ENCODE measurements at regions of chr6 and their contacts with region 1.

Region 1: DNA sequence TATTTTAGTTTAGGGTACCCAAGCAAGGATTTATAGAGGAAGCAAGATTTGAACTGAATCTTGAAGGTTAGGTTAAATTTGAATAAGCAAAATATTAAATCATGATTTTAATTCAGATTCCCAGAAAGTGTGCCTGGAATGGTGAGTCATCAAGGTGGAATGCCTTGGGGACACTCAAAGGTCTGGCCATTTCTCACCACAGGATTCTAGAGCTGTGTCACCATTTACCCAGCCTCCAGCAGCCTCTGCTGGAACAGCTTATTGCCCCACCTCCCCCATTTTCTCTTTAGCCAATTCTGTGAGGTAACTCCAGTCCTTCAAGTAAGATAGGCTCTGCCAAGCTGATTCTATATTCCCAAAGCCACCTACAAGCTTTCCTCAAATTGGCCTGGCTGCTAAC is 181.4 kb downstream of the SIM1 start:
- DNase-seq: peak; percentile 19 to 38 (median 33)
- ATAC-seq: peak; percentile 63
- H3K4me3 ChIP-seq: no peak overlapping the region
- H3K27ac ChIP-seq: no peak overlapping the region
- H3K4me1 ChIP-seq: peaks cover 2 to 5% of the 10 kb centered on the region in 2 experiments; a peak in 2 of 5 replicates
- H3K27me3 ChIP-seq: no peaks in the 10 kb centered on the region
- CTCF ChIP-seq: no peak; a peak in 1 of 6 replicates
- EP300 ChIP-seq: no peak
- POLR2A ChIP-seq: no peak
- RAD21 ChIP-seq: no peak

Region 2: GRCh38 chr6:100176311-100176950 is 106.9 kb before region 1 on chr6:
- CTCF ChIA-PET with region 1: no interaction called
- POLR2A ChIA-PET with region 1: no interaction called
- in situ Hi-C with region 1: no loop called
- intact Hi-C with region 1: loop called (anchors 5 kb)
- DNase-seq: peak in 2 of 4 experiments; percentile 22 to 58
- ATAC-seq: peak; percentile 93
- H3K4me3 ChIP-seq: no peak overlapping the region
- H3K27ac ChIP-seq: peak overlapping the region; percentile 3; the same call in 1 of the 3 replicates
- H3K4me1 ChIP-seq: peaks cover 0 to 11% of the 10 kb centered on the region in 2 experiments; a peak in 3 of 5 replicates
- H3K27me3 ChIP-seq: no peaks in the 10 kb centered on the region
- CTCF ChIP-seq: peak; percentile 38 to 60 (median 44); a peak in 4 of 6 replicates
- EP300 ChIP-seq: no peak
- POLR2A ChIP-seq: no peak
- RAD21 ChIP-seq: peak; percentile 65 to 70

Measured in K562 (cell line).